ENCODE measurements at regions of chr9 and their contacts with region 1.

Region 1: GRCh38 chr9:127555768-127556397 is 56.2 kb upstream of the STXBP1 start:
- DNase-seq: peak; percentile 88
- ATAC-seq: peak; percentile 92
- H3K4me3 Mint-ChIP-seq: peak overlapping the region; percentile 45
- H3K27ac Mint-ChIP-seq: peak overlapping the region; percentile 81
- H3K4me1 Mint-ChIP-seq: peaks cover 45% of the 10 kb centered on the region
- H3K27me3 Mint-ChIP-seq: no peaks in the 10 kb centered on the region
- CTCF ChIP-seq: no peak

Region 2: GRCh38 chr9:127437497-127438264 is 118.2 kb before region 1 on chr9:
- CTCF ChIA-PET with region 1: no interaction called
- POLR2A ChIA-PET with region 1: no interaction called
- intact Hi-C with region 1: no loop called
- DNase-seq: peak; percentile 54
- ATAC-seq: peak; percentile 86
- H3K4me3 Mint-ChIP-seq: no peak overlapping the region
- H3K27ac Mint-ChIP-seq: peak overlapping the region; percentile 72
- H3K4me1 Mint-ChIP-seq: peaks cover 16% of the 10 kb centered on the region
- H3K27me3 Mint-ChIP-seq: no peaks in the 10 kb centered on the region
- CTCF ChIP-seq: no peak

Region 3: DNA sequence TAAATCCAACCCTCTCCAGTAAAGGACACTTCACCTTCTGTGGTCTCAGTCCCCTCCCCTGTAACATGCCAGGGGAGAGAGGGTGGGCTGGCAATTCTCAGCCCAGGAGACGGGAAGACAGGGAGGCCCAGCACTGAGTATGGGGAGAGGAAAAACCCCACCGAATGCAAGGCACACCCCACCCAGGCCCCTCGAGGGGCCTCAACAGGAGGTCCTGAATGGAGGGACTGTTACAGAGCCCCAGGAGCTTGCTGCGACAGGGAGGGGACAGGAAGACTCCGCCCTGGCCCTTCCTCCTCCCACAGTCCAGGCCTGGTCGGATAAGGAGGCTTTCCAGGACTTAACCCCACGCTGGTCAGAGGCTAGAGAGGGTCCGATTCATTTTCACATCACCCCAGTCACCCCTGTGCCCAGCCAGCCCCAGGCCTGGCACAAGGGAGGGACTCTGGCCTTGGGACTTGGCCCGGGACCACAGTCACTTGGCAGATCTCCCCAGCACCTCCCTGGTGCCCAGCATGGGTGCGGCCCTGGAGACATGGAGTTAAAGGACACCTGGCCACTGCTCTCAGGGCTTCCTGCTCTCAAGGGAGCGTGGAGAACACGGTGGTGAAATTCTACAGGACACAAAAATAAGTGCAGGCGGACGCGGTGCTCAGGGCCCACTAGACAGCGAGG is 11.3 kb after region 1 on chr9:
- CTCF ChIA-PET with region 1: interaction called, 5 read pairs
- POLR2A ChIA-PET with region 1: interaction called, 19 read pairs
- intact Hi-C with region 1: no loop called
- DNase-seq: no peak
- ATAC-seq: no peak
- H3K4me3 Mint-ChIP-seq: peak overlapping the region; percentile 61
- H3K27ac Mint-ChIP-seq: no peak overlapping the region
- H3K4me1 Mint-ChIP-seq: peaks cover 20% of the 10 kb centered on the region
- H3K27me3 Mint-ChIP-seq: no peaks in the 10 kb centered on the region
- CTCF ChIP-seq: no peak

Region 4: DNA sequence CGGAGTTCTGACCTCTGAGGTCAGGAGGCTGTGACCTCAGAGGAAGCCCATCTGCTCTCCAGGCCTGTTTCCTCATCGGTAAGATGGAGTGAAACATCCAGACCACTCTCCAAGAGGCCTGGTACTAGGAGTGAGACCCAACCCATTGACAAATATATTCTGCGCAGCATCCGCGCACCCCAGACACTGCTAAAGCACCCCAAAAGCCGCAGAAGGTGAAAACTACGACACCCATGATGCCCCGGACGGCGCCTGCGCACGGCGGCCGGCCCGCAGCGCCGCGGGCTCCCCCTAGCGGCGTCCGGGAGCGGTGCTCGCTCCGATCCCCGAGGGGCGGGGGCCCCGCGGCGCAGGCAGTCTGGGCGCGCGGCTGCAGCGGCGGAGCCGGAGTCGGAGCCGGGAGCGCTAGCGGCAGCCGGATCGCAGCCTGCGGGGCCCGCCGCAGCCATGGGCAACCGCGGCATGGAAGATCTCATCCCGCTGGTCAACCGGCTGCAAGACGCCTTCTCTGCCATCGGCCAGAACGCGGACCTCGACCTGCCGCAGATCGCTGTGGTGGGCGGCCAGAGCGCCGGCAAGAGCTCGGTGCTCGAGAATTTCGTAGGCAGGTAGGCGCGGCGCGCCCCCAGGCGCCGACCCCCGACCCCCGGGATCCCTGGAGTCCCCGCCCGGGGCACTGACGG is 647.3 kb after region 1 on chr9 and contains the start of gene DNM1:
- CTCF ChIA-PET with region 1: no interaction called
- POLR2A ChIA-PET with region 1: no interaction called
- intact Hi-C with region 1: no loop called
- DNase-seq: peak; percentile 66
- ATAC-seq: peak; percentile 94
- H3K4me3 Mint-ChIP-seq: peak within 1 kb of the TSS; percentile 62
- H3K27ac Mint-ChIP-seq: peak within 1 kb of the TSS; percentile 77
- H3K4me1 Mint-ChIP-seq: peaks cover 18% of the 10 kb centered on the region
- H3K27me3 Mint-ChIP-seq: peaks cover 9% of the 10 kb centered on the region
- CTCF ChIP-seq: peak; percentile 95
- total RNA-seq, gene DNM1: 0.36 to 0.59 TPM